GM12878 (cell line): ENCODE measurements at regions of chr1 and their contacts with region 1.

Region 1: GRCh38 chr1:161225534-161226319 is at the start of gene TOMM40L:
- DNase-seq: peak; percentile 97
- ATAC-seq: peak; percentile 96
- H3K4me3 ChIP-seq: peak within 1 kb of the TSS; percentile 83
- H3K27ac ChIP-seq: peak within 1 kb of the TSS; percentile 70
- H3K4me1 ChIP-seq: peaks cover 19% of the 10 kb centered on the region
- H3K27me3 ChIP-seq: no peaks in the 10 kb centered on the region
- CTCF ChIP-seq: peak; percentile 61 to 66 (median 64)
- EP300 ChIP-seq: no peak
- POLR2A ChIP-seq: peak; percentile 62; the same call in 1 of the 2 replicates
- RAD21 ChIP-seq: peak; percentile 61
- polyA plus RNA-seq, gene TOMM40L: 5.9 to 10.0 TPM

Region 2: DNA sequence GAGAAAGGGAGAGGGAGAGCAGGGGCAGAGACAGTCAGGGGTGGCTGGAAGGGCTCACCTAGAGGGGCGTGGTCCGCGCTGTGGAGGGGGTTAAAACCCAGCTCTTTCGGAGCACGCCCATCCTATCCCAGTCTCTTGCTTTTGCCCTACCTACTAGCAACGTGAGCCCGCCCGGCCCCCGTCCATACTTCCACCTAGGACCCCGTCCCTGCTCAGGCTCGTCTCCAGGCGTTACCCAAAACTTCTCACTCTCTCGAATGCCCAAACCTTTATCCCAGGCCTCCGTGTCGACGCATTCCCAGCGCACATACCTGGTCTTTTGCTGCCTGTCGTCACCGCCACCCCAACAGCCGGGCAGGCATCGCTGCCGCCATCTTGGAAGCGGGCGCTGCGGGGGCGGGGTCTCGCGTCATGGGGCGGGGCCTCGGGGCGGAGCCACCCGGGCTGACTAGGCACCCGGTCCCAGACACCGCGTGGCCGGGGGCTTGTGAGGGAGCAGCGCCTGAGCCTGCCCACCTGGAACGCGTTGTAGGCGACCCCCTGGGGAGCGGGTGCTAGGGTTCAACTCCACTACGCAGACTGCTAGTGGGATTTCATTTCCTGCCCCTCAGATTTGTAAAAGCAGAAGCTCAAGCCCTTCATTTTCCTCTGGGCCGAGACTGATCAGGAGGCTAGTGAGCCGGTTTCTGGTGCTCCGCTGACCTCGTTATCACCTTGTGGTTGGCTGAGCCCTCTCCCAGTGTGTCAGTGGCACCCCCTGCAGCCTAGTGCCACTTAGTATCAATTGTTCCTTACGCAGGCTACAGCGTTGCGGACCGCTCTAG is 48.4 kb before region 1 on chr1 and contains the start of gene B4GALT3:
- CTCF ChIA-PET with region 1: interaction called, 74 read pairs
- POLR2A ChIA-PET with region 1: interaction called, 4 read pairs
- RAD21 ChIA-PET with region 1: interaction called, 24 read pairs
- SMC1A ChIA-PET with region 1: interaction called, 50 read pairs
- in situ Hi-C with region 1: no loop called
- intact Hi-C with region 1: no loop called
- DNase-seq: no peak
- ATAC-seq: peak; percentile 93
- H3K4me3 ChIP-seq: peak within 1 kb of the TSS; percentile 90
- H3K27ac ChIP-seq: peak within 1 kb of the TSS; percentile 87
- H3K4me1 ChIP-seq: peaks cover 33% of the 10 kb centered on the region
- H3K27me3 ChIP-seq: no peaks in the 10 kb centered on the region
- CTCF ChIP-seq: 0 out of 6 replicates have a peak, but pooled peaks of 1 of the 3 experiments have one; percentile 8
- EP300 ChIP-seq: no peak
- POLR2A ChIP-seq: peak; percentile 94
- RAD21 ChIP-seq: peak; percentile 17; the same call in 1 of the 2 replicates
- polyA plus RNA-seq, gene B4GALT3: 27.1 to 39.7 TPM

Region 3: GRCh38 chr1:161201828-161202725 is 23.6 kb before region 1 on chr1 and contains the start of gene NDUFS2:
- CTCF ChIA-PET with region 1: interaction called, 385 read pairs
- POLR2A ChIA-PET with region 1: interaction called, 22 read pairs
- RAD21 ChIA-PET with region 1: interaction called, 72 read pairs
- SMC1A ChIA-PET with region 1: interaction called, 66 read pairs
- in situ Hi-C with region 1: no loop called
- intact Hi-C with region 1: loop called (anchors 2 kb)
- DNase-seq: peak; percentile 94
- ATAC-seq: peak; percentile 99
- H3K4me3 ChIP-seq: peak within 1 kb of the TSS; percentile 95
- H3K27ac ChIP-seq: peak within 1 kb of the TSS; percentile 86
- H3K4me1 ChIP-seq: peaks cover 21% of the 10 kb centered on the region
- H3K27me3 ChIP-seq: no peaks in the 10 kb centered on the region
- CTCF ChIP-seq: peak in 1 of 3 experiments; percentile 5; a peak in 2 of 6 replicates
- EP300 ChIP-seq: no peak
- POLR2A ChIP-seq: peak; percentile 96
- RAD21 ChIP-seq: no peak
- polyA plus RNA-seq, gene NDUFS2: 66.5 to 93.9 TPM

Region 4: GRCh38 chr1:161258439-161259344 is 33.0 kb after region 1 on chr1 and contains the start of gene PCP4L1:
- CTCF ChIA-PET with region 1: interaction called, 8 read pairs
- POLR2A ChIA-PET with region 1: no interaction called
- RAD21 ChIA-PET with region 1: interaction called, 16 read pairs
- SMC1A ChIA-PET with region 1: interaction called, 7 read pairs
- in situ Hi-C with region 1: no loop called
- intact Hi-C with region 1: no loop called
- DNase-seq: no peak
- ATAC-seq: peak; percentile 76
- H3K4me3 ChIP-seq: peak within 1 kb of the TSS; percentile 47
- H3K27ac ChIP-seq: no peak within 1 kb of the TSS
- H3K4me1 ChIP-seq: peaks cover 13% of the 10 kb centered on the region
- H3K27me3 ChIP-seq: peaks cover 0 to 5% of the 10 kb centered on the region in 2 experiments; a peak in 1 of 4 replicates
- CTCF ChIP-seq: no peak
- EP300 ChIP-seq: no peak
- POLR2A ChIP-seq: no peak
- RAD21 ChIP-seq: no peak
- polyA plus RNA-seq, gene PCP4L1: 1.0 to 1.1 TPM

Region 5: DNA sequence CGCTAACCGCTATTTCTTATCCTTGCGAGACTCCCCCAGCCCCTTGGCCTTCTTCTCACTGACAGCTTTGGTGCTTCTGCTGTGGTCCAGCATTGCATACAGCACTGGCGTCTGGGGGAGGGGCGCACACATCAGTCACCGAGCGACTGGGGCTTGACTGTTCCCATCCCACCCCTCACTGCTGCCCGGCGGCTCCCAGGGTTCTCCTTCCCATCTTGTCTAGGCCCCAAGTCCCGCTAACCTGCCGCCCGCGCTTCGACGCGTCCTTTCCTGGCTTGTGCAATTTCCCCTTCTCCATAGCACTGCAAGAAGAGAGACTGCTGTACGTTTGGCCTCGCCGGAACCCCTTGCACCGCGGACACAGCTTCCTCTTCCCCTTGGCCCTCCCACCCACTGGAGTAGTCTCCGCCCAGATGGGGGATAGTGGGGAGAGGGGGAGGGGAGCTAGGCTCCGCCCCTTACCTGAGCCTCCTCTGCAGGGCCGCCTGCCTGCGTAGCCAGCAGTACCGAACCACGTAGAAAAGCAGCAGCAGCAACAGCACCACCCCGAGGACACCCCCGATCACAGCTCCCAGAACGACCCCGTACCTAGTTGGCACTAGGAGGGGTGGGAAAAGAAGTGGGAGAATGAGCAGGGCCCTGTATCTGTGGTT is 80.3 kb after region 1 on chr1:
- CTCF ChIA-PET with region 1: interaction called, 33 read pairs
- POLR2A ChIA-PET with region 1: no interaction called
- RAD21 ChIA-PET with region 1: interaction called, 22 read pairs
- SMC1A ChIA-PET with region 1: interaction called, 18 read pairs
- in situ Hi-C with region 1: no loop called
- intact Hi-C with region 1: loop called (anchors 5 kb)
- DNase-seq: peak; percentile 65
- ATAC-seq: peak; percentile 92
- H3K4me3 ChIP-seq: peak overlapping the region; percentile 94
- H3K27ac ChIP-seq: peak overlapping the region; percentile 13; the same call in 1 of the 2 replicates
- H3K4me1 ChIP-seq: peaks cover 12% of the 10 kb centered on the region
- H3K27me3 ChIP-seq: no peaks in the 10 kb centered on the region
- CTCF ChIP-seq: peak; percentile 41 to 51 (median 51); a peak in 5 of 6 replicates
- EP300 ChIP-seq: no peak
- POLR2A ChIP-seq: peak; percentile 77
- RAD21 ChIP-seq: peak; percentile 38; the same call in 1 of the 2 replicates

Region 6: DNA sequence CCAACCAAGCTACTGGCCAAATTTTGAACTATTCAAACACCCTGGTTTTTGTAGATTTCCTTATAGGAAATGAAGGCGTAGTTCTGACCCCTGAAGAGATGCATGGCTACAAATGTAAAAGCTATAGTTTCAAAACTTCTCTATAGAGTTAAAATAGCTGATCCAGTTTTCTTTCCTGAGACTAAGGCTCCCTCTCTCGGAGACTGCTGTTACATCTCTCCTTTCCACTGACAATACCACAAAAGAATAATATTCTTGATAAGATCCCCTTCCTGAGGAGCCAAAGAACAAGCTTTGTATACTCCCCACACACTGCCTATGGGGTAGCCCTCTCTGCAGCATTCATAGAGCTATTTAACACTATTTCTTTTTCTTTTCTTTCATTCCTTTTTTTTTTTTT is 148.6 kb after region 1 on chr1:
- CTCF ChIA-PET with region 1: interaction called, 204 read pairs
- POLR2A ChIA-PET with region 1: interaction called, 4 read pairs
- RAD21 ChIA-PET with region 1: interaction called, 77 read pairs
- SMC1A ChIA-PET with region 1: interaction called, 72 read pairs
- in situ Hi-C with region 1: no loop called
- intact Hi-C with region 1: no loop called
- DNase-seq: no peak
- ATAC-seq: no peak
- H3K4me3 ChIP-seq: no peak overlapping the region
- H3K27ac ChIP-seq: no peak overlapping the region
- H3K4me1 ChIP-seq: no peaks in the 10 kb centered on the region
- H3K27me3 ChIP-seq: no peaks in the 10 kb centered on the region
- CTCF ChIP-seq: peak in 1 of 3 experiments; percentile 28; a peak in 2 of 6 replicates
- EP300 ChIP-seq: no peak
- POLR2A ChIP-seq: no peak
- RAD21 ChIP-seq: peak; percentile 36; the same call in 1 of the 2 replicates